H1 (cell line): ENCODE measurements at regions of chr20 and their contacts with region 1.

Region 1: DNA sequence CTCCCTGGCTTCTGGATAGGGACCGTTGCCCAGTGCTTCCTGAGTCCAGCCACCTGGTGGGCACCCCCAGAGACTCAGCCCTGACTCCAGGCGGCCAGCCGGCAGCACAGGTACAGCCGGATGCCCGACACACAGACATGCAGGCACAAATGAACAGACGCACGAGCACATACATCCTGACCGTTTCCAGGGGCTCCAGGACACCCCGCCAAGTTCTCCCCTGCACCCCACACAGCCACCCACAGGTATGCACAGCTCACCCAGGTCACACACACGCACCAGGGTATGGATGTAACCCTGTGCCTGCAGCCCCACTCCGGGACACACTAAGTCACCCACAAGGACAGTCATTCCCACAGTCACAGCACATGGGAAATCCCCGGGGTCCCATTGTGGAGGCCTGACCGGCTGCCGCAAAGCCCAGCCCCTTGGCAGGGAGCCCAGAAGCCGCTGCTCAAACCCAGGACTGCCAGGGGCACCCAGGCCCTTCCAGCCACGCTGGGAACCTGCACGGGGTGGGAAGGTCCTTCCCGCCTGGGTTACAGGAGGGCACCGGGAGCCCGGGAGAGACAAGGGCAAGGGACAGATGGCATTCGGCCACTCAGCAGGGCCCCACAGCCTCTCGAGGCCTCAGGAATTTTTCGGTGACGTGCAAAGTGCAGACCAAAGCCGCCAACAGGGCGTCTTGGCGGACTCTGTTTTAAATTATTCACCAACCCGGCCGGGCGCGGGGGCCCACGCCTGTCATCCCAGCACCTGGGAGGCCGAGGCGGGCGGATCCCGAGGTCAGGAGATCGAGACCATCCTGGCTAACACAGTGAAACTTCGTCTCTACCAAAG is 10.6 kb upstream of the KCNQ2 start:
- DNase-seq: no peak
- H3K4me3 ChIP-seq: no peak overlapping the region
- H3K27ac ChIP-seq: no peak overlapping the region
- H3K4me1 ChIP-seq: peaks cover 0 to 24% (median 13%) of the 10 kb centered on the region in 4 experiments; a peak in 5 of 7 replicates
- H3K27me3 ChIP-seq: peaks cover 0 to 7% (median 4%) of the 10 kb centered on the region in 4 experiments; a peak in 4 of 7 replicates
- CTCF ChIP-seq: no peak
- EP300 ChIP-seq: no peak
- POLR2A ChIP-seq: no peak
- RAD21 ChIP-seq: no peak

Region 2: GRCh38 chr20:63370618-63371187 is 112.4 kb before region 1 on chr20:
- CTCF ChIA-PET with region 1: no interaction called
- POLR2A ChIA-PET with region 1: no interaction called
- DNase-seq: no peak
- H3K4me3 ChIP-seq: no peak overlapping the region
- H3K27ac ChIP-seq: no peak overlapping the region
- H3K4me1 ChIP-seq: peaks cover 0 to 7% (median 2%) of the 10 kb centered on the region in 4 experiments; a peak in 3 of 7 replicates
- H3K27me3 ChIP-seq: no peaks in the 10 kb centered on the region; a peak in 1 of 7 replicates
- CTCF ChIP-seq: no peak
- EP300 ChIP-seq: no peak
- POLR2A ChIP-seq: no peak
- RAD21 ChIP-seq: no peak

Region 3: GRCh38 chr20:63442100-63442493 is 41.0 kb before region 1 on chr20:
- CTCF ChIA-PET with region 1: interaction called, 14 read pairs
- POLR2A ChIA-PET with region 1: interaction called, 4 read pairs
- DNase-seq: peak in 1 of 2 experiments; percentile 79
- H3K4me3 ChIP-seq: no peak overlapping the region
- H3K27ac ChIP-seq: no peak overlapping the region
- H3K4me1 ChIP-seq: peaks cover 0 to 5% (median 1%) of the 10 kb centered on the region in 4 experiments; a peak in 2 of 7 replicates
- H3K27me3 ChIP-seq: no peaks in the 10 kb centered on the region
- CTCF ChIP-seq: peak; percentile 59 to 76 (median 59)
- EP300 ChIP-seq: no peak
- POLR2A ChIP-seq: no peak
- RAD21 ChIP-seq: peak; percentile 57 to 72